Dorsolateral prefrontal cortex (tissue), 120 donors: ENCODE measurements at regions of chr13 and their contacts with region 1.

Region 1: GRCh38 chr13:49840266-49840665 is 47.8 kb upstream of the KPNA3 start:
- DNase-seq: no peak
- H3K4me3 ChIP-seq: no peak overlapping the region
- H3K27ac ChIP-seq: no peak overlapping the region
- H3K27me3 ChIP-seq: no peaks in the 10 kb centered on the region
- CTCF ChIP-seq: no peak

Region 2: GRCh38 chr13:49530457-49530856 is 309.8 kb before region 1 on chr13:
- intact Hi-C with region 1: no loop called
- DNase-seq: no peak
- H3K4me3 ChIP-seq: no peak overlapping the region
- H3K27ac ChIP-seq: peak overlapping the region in 28 of 59 donors; percentile 5 to 73 (median 39)
- H3K27me3 ChIP-seq: no peaks in the 10 kb centered on the region
- CTCF ChIP-seq: no peak

Region 3: GRCh38 chr13:49669735-49670309 is 170.4 kb before region 1 on chr13:
- intact Hi-C with region 1: loop called in 1 of 2 experiments (anchors 5 kb)
- DNase-seq: peak; percentile 28 to 74 (median 64)
- H3K4me3 ChIP-seq: no peak overlapping the region
- H3K27ac ChIP-seq: peak overlapping the region in 1 of 59 donors; percentile 5
- H3K27me3 ChIP-seq: no peaks in the 10 kb centered on the region
- CTCF ChIP-seq: peak in 55 of 56 donors; percentile 51 to 92 (median 73)